MCF 10A (cell line): ENCODE measurements at regions of chr5 and their contacts with region 1.

Region 1: GRCh38 chr5:126600631-126601511 is at the start of gene PHAX:
- DNase-seq: peak; percentile 86
- H3K4me3 Mint-ChIP-seq: peak within 1 kb of the TSS; percentile 86
- H3K27ac Mint-ChIP-seq: peak within 1 kb of the TSS; percentile 83
- H3K4me1 Mint-ChIP-seq: peaks cover 31% of the 10 kb centered on the region
- H3K27me3 Mint-ChIP-seq: no peaks in the 10 kb centered on the region
- CTCF ChIP-seq: peak; percentile 71
- total RNA-seq, gene PHAX: 57.4 and 73.2 TPM in 2 replicates

Region 2: GRCh38 chr5:125898851-125899405 is 701.9 kb before region 1 on chr5:
- CTCF ChIA-PET with region 1: no interaction called
- POLR2A ChIA-PET with region 1: no interaction called
- intact Hi-C with region 1: no loop called
- DNase-seq: no peak
- H3K4me3 Mint-ChIP-seq: no peak overlapping the region
- H3K27ac Mint-ChIP-seq: no peak overlapping the region
- H3K4me1 Mint-ChIP-seq: peaks cover 9% of the 10 kb centered on the region
- H3K27me3 Mint-ChIP-seq: no peaks in the 10 kb centered on the region
- CTCF ChIP-seq: no peak

Region 3: DNA sequence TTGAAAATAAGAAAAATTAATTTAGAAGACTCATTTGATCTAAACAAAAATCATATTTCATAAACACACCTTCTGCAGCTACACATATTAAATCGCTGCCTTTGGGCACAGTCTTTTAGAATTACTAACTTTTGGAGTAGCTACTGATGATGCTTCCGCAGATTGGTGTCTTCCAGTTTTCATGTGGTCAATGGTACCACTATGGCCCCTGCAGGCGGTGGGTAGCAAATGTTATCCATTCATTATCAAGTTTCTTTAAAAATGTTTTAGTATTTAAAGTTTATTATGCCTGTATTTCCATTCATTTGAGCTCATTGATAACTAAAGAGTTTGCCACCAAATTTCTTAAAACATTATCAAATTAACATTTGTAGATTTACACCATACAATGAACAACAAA is 300.6 kb before region 1 on chr5:
- CTCF ChIA-PET with region 1: no interaction called
- POLR2A ChIA-PET with region 1: no interaction called
- intact Hi-C with region 1: no loop called
- DNase-seq: no peak
- H3K4me3 Mint-ChIP-seq: no peak overlapping the region
- H3K27ac Mint-ChIP-seq: no peak overlapping the region
- H3K4me1 Mint-ChIP-seq: no peaks in the 10 kb centered on the region
- H3K27me3 Mint-ChIP-seq: no peaks in the 10 kb centered on the region
- CTCF ChIP-seq: no peak

Region 4: GRCh38 chr5:126339215-126339805 is 261.6 kb before region 1 on chr5:
- CTCF ChIA-PET with region 1: interaction called, 22 read pairs
- POLR2A ChIA-PET with region 1: interaction called, 4 read pairs
- intact Hi-C with region 1: loop called (anchors 1 kb)
- DNase-seq: peak; percentile 86
- H3K4me3 Mint-ChIP-seq: no peak overlapping the region
- H3K27ac Mint-ChIP-seq: no peak overlapping the region
- H3K4me1 Mint-ChIP-seq: peaks cover 5% of the 10 kb centered on the region
- H3K27me3 Mint-ChIP-seq: no peaks in the 10 kb centered on the region
- CTCF ChIP-seq: peak; percentile 85

Region 5: DNA sequence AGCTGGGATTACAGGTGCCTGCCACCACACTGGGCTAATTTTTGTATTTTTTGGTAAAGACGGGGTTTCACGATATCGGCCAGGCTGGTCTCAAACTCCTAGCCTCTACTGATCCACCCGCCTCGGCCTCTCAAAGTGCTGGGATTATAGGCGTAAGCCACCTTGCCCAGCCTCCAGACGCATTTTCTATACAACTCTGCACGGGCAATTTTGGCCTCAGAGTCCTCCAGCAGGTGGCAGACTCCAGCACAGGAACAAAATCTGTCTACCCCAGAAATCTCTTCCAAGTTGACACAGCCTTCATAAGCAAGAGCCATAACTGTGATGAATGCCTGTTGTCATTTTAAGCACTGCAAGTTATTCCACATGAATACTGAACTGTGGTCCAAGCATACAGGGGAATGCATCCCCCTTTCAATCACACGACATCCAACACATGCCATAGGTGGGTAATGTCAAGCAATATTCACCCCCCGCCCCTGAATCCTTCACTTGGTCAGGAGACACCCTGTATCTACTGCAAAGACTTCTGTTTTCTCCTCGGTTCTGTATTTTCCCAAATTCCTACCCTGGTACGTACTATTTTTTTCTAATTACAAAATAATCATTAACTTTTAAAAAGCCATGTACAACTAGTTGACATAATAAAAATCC is 56.7 kb before region 1 on chr5:
- CTCF ChIA-PET with region 1: interaction called, 25 read pairs
- POLR2A ChIA-PET with region 1: interaction called, 6 read pairs
- intact Hi-C with region 1: loop called (anchors 1 kb)
- DNase-seq: peak; percentile 60
- H3K4me3 Mint-ChIP-seq: no peak overlapping the region
- H3K27ac Mint-ChIP-seq: peak overlapping the region; percentile 33
- H3K4me1 Mint-ChIP-seq: no peaks in the 10 kb centered on the region
- H3K27me3 Mint-ChIP-seq: no peaks in the 10 kb centered on the region
- CTCF ChIP-seq: peak; percentile 63

Region 6: GRCh38 chr5:126576974-126577373 is 23.9 kb before region 1 on chr5:
- CTCF ChIA-PET with region 1: interaction called, 21 read pairs
- POLR2A ChIA-PET with region 1: interaction called, 9 read pairs
- intact Hi-C with region 1: no loop called
- DNase-seq: no peak
- H3K4me3 Mint-ChIP-seq: no peak overlapping the region
- H3K27ac Mint-ChIP-seq: no peak overlapping the region
- H3K4me1 Mint-ChIP-seq: no peaks in the 10 kb centered on the region
- H3K27me3 Mint-ChIP-seq: no peaks in the 10 kb centered on the region
- CTCF ChIP-seq: no peak

Region 7: GRCh38 chr5:126587551-126588390 is 13.1 kb before region 1 on chr5:
- CTCF ChIA-PET with region 1: interaction called, 15 read pairs
- POLR2A ChIA-PET with region 1: interaction called, 4 read pairs
- intact Hi-C with region 1: no loop called
- DNase-seq: no peak
- H3K4me3 Mint-ChIP-seq: no peak overlapping the region
- H3K27ac Mint-ChIP-seq: peak overlapping the region; percentile 39
- H3K4me1 Mint-ChIP-seq: peaks cover under 1% of the 10 kb centered on the region
- H3K27me3 Mint-ChIP-seq: no peaks in the 10 kb centered on the region
- CTCF ChIP-seq: no peak

Region 8: GRCh38 chr5:126624534-126624933 is 23.7 kb after region 1 on chr5:
- CTCF ChIA-PET with region 1: interaction called, 12 read pairs
- POLR2A ChIA-PET with region 1: interaction called, 3 read pairs
- intact Hi-C with region 1: no loop called
- DNase-seq: peak; percentile 82
- H3K4me3 Mint-ChIP-seq: no peak overlapping the region
- H3K27ac Mint-ChIP-seq: peak overlapping the region; percentile 80
- H3K4me1 Mint-ChIP-seq: peaks cover 8% of the 10 kb centered on the region
- H3K27me3 Mint-ChIP-seq: no peaks in the 10 kb centered on the region
- CTCF ChIP-seq: no peak

Region 9: DNA sequence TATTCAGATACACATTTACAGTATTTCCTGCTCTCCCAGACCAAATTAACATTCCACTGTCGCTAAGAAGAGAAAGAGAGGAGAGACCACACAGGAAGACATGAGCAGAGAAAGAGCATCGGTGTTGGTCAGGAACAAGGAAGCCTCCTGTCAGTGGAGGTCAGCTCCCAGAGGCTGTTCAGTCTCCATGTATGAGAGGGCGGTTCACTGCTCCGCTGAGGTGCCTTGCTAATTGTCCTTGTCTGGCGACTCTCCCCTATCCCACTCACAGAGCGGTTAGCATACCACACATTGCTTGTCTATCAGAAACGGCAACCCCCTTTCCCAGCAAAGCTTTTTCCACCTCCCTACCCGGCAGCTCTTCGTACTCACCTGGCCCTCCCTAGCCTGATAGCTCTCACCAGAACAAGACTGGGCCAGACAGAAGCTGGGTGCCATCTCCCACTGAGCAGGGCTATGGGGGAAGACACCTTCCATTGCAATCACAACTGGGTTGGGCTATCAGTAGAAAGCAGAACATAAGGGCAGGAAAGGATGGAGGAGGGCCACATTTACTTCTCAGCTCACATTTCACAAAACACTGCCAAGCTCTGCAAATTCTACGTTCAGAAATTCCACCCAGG is 117.5 kb after region 1 on chr5:
- CTCF ChIA-PET with region 1: no interaction called
- POLR2A ChIA-PET with region 1: no interaction called
- intact Hi-C with region 1: no loop called
- DNase-seq: no peak
- H3K4me3 Mint-ChIP-seq: no peak overlapping the region
- H3K27ac Mint-ChIP-seq: no peak overlapping the region
- H3K4me1 Mint-ChIP-seq: no peaks in the 10 kb centered on the region
- H3K27me3 Mint-ChIP-seq: no peaks in the 10 kb centered on the region
- CTCF ChIP-seq: no peak